IMR-90 (cell line): ENCODE measurements at regions of chr11 and their contacts with region 1.

Region 1: GRCh38 chr11:96614846-96615245 is 225.0 kb downstream of the JRKL start:
- DNase-seq: no peak
- ATAC-seq: no peak
- H3K4me3 ChIP-seq: no peak overlapping the region
- H3K27ac ChIP-seq: no peak overlapping the region
- H3K4me1 ChIP-seq: no peaks in the 10 kb centered on the region
- H3K27me3 ChIP-seq: no peaks in the 10 kb centered on the region
- CTCF ChIP-seq: no peak
- POLR2A ChIP-seq: no peak
- RAD21 ChIP-seq: no peak

Region 2: GRCh38 chr11:94993400-94993943 is 1621.4 kb before region 1 on chr11:
- CTCF ChIA-PET with region 1: no interaction called
- POLR2A ChIA-PET with region 1: no interaction called
- dilution Hi-C with region 1: no loop called
- in situ Hi-C with region 1: no loop called
- intact Hi-C with region 1: loop called (anchors 5 kb)
- DNase-seq: no peak
- ATAC-seq: no peak
- H3K4me3 ChIP-seq: no peak overlapping the region
- H3K27ac ChIP-seq: no peak overlapping the region
- H3K4me1 ChIP-seq: no peaks in the 10 kb centered on the region
- H3K27me3 ChIP-seq: peaks cover 5% of the 10 kb centered on the region; the same call in 1 of the 2 replicates
- CTCF ChIP-seq: no peak
- POLR2A ChIP-seq: no peak
- RAD21 ChIP-seq: no peak